ENCODE measurements at regions of chrX and their contacts with region 1.

Region 1: DNA sequence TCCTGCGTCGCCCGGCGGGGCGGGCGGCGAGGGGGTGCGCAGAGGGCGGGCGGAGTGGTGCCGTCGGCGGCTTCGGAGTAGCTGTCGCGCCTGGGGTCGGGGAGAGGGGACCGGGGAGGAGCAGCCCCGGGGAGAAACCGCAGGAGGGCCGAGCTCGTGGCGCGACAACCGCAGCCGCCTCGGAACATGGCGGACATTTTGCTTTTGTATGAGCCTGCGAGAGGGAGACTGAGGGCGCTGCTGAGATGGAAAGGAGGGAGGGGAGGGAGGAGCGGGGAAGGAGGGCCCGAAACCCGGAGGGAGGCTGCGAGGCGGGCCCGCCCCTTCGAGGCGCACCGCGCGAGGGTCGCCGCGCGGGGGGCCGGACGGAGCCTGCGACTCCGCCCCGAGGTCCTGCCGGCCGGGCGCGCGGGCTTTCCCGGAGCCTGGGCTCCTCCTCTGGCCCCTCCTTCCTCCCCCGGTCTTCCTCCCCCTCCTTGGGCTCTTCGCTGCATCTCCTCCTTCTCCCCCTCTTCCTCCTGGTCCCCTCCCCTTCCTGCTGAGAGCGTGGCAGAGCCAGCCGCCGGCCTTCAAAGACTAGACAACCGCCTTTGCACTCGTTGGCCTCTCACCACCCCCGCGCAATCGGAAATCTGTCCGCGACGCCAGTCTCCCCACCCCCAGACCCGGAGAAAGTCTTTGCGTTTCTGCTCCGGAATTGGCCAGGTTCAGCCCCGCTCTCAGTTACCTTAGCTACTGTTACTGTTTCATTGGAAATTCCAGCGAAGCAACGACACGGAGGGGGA is 1.1 kb downstream of the INTS6L start:
- DNase-seq: peak; percentile 92
- ATAC-seq: peak; percentile 73
- H3K4me3 Mint-ChIP-seq: peak overlapping the region; percentile 99
- H3K27ac Mint-ChIP-seq: peak overlapping the region; percentile 90
- H3K4me1 Mint-ChIP-seq: peaks cover 40% of the 10 kb centered on the region
- H3K27me3 Mint-ChIP-seq: no peaks in the 10 kb centered on the region

Region 2: DNA sequence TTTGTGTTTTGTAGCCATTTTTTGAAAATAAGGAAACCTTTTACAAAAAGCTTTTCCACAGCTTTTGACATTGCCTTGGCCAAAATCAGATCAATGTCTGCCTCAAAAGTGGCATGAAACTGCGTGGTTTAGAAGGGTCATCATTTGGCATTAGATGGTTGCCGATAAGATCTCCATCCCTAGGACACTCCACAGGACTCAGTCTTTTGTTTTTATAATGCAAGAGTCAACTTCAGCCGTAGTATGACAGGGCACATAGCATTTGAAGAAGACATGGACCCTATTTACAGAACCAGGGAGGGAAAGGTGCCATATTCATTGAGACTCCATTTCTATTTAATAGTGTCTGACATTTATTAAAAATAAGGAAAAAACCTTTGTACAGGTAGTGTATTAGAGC is 471.0 kb before region 1 on chrX:
- CTCF ChIA-PET with region 1: no interaction called
- POLR2A ChIA-PET with region 1: no interaction called
- intact Hi-C with region 1: loop called in 1 of 2 experiments (anchors 1 kb)
- DNase-seq: no peak
- ATAC-seq: no peak
- H3K4me3 Mint-ChIP-seq: peak overlapping the region; percentile 87
- H3K27ac Mint-ChIP-seq: peak overlapping the region; percentile 74
- H3K4me1 Mint-ChIP-seq: peaks cover 25% of the 10 kb centered on the region
- H3K27me3 Mint-ChIP-seq: no peaks in the 10 kb centered on the region

Region 3: DNA sequence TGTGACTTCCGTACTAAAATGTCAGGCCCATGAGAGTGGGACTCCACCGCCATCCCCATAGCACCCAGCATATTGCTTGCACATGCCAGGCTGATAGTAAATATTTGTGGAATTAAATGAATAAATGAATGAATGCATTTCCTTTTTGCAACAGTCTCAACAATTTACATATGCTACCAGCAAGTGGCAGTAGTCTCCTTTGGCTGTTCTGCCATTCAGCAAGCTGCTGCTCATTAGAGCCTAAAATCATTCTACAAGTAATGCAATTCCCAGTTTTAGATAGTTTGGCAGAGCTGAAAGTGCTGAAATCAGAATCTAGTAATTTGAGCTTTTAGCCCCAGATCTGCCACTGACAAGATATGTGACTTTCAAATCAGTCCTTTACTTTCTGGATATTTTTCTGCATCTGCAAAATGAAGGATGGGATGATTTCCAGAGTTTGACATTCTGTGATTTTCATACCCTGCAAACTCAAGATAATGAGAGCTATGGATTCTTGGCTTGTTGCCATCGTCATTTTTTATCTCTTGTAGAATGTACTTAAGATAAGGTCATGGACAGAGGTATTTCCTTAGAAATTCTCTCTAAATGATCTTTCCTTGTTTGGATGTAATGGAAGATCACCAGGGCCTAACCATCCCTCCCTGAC is 36.8 kb before region 1 on chrX:
- CTCF ChIA-PET with region 1: interaction called, 3 read pairs
- POLR2A ChIA-PET with region 1: no interaction called
- intact Hi-C with region 1: loop called in 1 of 2 experiments (anchors 2 kb)
- DNase-seq: peak; percentile 27
- ATAC-seq: no peak
- H3K4me3 Mint-ChIP-seq: no peak overlapping the region
- H3K27ac Mint-ChIP-seq: no peak overlapping the region
- H3K4me1 Mint-ChIP-seq: peaks cover 3% of the 10 kb centered on the region
- H3K27me3 Mint-ChIP-seq: no peaks in the 10 kb centered on the region

Region 4: DNA sequence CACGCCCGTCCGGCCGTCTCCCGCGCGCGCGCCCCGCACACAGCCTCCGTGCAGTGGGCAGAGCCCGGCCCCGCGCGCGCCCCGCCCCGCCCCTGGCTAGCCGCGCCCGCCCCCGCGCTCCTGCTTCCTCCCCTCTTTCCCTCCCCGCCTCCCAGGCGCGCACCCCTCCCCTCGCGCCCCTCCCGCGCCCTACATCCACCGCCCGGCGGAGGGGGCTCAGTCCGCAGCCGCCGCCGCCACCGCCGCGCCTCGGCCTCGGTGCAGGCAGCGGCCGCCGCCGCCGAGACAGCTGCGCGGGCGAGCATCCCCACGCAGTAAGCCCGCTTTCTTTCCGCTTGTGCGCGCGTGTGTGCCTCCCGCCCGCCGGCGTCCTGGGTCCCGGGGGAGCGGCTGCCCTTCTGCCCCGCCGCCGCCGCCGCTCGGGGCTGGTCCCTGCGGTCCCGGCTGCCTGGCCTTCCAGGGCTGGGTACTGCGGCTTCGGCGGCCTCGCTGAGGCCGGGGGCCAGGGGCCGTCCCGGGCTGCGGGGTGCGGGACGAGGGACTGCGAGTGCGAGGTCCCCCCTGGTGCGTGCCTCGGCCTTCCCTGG is 625.8 kb after region 1 on chrX and contains the start of gene FHL1:
- CTCF ChIA-PET with region 1: interaction called, 3 read pairs
- POLR2A ChIA-PET with region 1: no interaction called
- intact Hi-C with region 1: loop called in 1 of 2 experiments (anchors 10 kb)
- DNase-seq: peak; percentile 69
- ATAC-seq: peak; percentile 63
- H3K4me3 Mint-ChIP-seq: peak within 1 kb of the TSS; percentile 80
- H3K27ac Mint-ChIP-seq: peak within 1 kb of the TSS; percentile 74
- H3K4me1 Mint-ChIP-seq: peaks cover 32% of the 10 kb centered on the region
- H3K27me3 Mint-ChIP-seq: no peaks in the 10 kb centered on the region
- total RNA-seq, gene FHL1: 19.3 to 19.8 TPM

Region 5: GRCh38 chrX:136652822-136653723 is 1131.5 kb after region 1 on chrX:
- CTCF ChIA-PET with region 1: no interaction called
- POLR2A ChIA-PET with region 1: no interaction called
- intact Hi-C with region 1: loop called in 1 of 2 experiments (anchors 10 kb)
- DNase-seq: peak; percentile 61
- ATAC-seq: peak; percentile 56
- H3K4me3 Mint-ChIP-seq: peak overlapping the region; percentile 96
- H3K27ac Mint-ChIP-seq: peak overlapping the region; percentile 100
- H3K4me1 Mint-ChIP-seq: peaks cover 43% of the 10 kb centered on the region
- H3K27me3 Mint-ChIP-seq: no peaks in the 10 kb centered on the region

Measured in activated CD4-positive, alpha-beta T cell treated with anti-CD3 and anti-CD28 coated beads for 36 hours (primary cell).